ENCODE measurements at regions of chr22 and their contacts with region 1.

Region 1: GRCh38 chr22:42369245-42370041 is 62.8 kb downstream of the NFAM1 start:
- DNase-seq: peak; percentile 82
- H3K4me3 Mint-ChIP-seq: peak overlapping the region; percentile 85
- H3K27ac Mint-ChIP-seq: peak overlapping the region; percentile 30
- H3K4me1 Mint-ChIP-seq: peaks cover 7% of the 10 kb centered on the region
- H3K27me3 Mint-ChIP-seq: peaks cover 40% of the 10 kb centered on the region

Region 2: GRCh38 chr22:41800348-41801146 is 568.9 kb before region 1 on chr22 and contains the start of gene CCDC134:
- intact Hi-C with region 1: loop called (anchors 1 kb)
- DNase-seq: peak; percentile 90
- H3K4me3 Mint-ChIP-seq: peak within 1 kb of the TSS; percentile 99
- H3K27ac Mint-ChIP-seq: peak within 1 kb of the TSS; percentile 98
- H3K4me1 Mint-ChIP-seq: peaks cover 35% of the 10 kb centered on the region
- H3K27me3 Mint-ChIP-seq: no peaks in the 10 kb centered on the region
- total RNA-seq, gene CCDC134: 18.0 and 19.6 TPM in 2 replicates

Region 3: DNA sequence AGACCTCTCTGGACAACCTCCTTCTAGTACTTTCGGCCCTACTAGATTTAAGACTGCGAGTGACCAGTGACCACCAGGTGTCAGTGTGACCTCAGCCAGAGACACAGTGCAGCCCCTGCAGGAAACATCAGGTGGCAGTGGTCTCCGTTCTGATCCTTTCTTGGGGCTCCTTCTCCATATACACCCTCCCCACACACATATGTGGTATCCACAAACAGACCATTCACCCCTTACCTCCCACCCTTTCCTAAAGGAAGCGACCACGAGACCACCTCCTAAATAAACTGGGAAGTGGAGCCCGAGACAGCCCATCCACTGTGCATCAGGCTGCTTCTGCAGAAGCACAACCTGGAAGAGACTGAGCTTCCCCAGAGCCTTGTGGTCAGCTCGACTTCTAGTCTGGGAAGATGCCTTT is 200.4 kb before region 1 on chr22:
- intact Hi-C with region 1: loop called (anchors 5 kb)
- DNase-seq: peak; percentile 47
- H3K4me3 Mint-ChIP-seq: no peak overlapping the region
- H3K27ac Mint-ChIP-seq: peak overlapping the region; percentile 34
- H3K4me1 Mint-ChIP-seq: peaks cover 23% of the 10 kb centered on the region
- H3K27me3 Mint-ChIP-seq: no peaks in the 10 kb centered on the region

Region 4: GRCh38 chr22:42294034-42294985 is 75.1 kb before region 1 on chr22:
- intact Hi-C with region 1: no loop called
- DNase-seq: no peak
- H3K4me3 Mint-ChIP-seq: no peak overlapping the region
- H3K27ac Mint-ChIP-seq: no peak overlapping the region
- H3K4me1 Mint-ChIP-seq: peaks cover 16% of the 10 kb centered on the region
- H3K27me3 Mint-ChIP-seq: no peaks in the 10 kb centered on the region

Region 5: DNA sequence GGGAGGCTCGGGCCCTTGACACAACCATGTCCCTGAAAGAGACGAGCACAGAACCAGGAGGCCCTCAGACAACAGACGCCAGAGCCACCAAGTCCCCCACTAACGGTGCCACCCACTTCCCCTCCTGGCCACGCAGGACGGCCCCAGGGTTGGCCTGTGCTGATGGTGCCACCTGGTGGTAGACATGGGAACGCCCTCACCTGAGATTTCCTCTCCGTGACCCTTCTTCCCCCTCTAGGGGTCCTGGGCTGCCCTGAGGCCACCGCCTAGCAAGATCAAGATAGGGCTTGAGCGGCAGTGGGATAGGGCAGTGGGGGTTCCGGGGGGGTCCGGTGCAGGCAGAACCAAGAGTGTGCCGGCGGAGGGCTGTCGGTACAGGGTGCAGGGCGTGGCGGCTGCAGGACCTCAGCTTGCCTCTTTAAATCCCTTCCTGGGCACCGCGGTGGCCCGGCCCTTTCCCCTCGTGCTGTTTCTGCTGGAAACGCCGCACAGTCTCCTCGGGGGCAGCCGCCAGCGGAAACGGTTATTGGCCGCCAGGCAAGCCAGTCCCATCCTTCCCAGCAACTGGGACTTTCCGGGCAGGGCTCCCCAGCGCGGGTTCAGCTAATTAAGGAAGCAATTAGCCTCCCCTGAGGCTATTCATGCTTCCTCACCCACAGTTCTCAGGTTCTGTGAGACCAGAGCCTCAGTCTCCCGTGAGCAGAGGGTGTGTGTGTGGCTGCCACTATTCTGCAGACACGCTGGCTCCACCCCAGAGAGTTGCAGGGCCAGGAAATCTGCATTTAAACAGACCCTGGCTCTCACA is 68.2 kb after region 1 on chr22:
- intact Hi-C with region 1: loop called (anchors 2 kb)
- DNase-seq: peak; percentile 76
- H3K4me3 Mint-ChIP-seq: peak overlapping the region; percentile 83
- H3K27ac Mint-ChIP-seq: peak overlapping the region; percentile 73
- H3K4me1 Mint-ChIP-seq: peaks cover 21% of the 10 kb centered on the region
- H3K27me3 Mint-ChIP-seq: peaks cover 8% of the 10 kb centered on the region

Region 6: GRCh38 chr22:42500161-42500835 is 130.9 kb after region 1 on chr22:
- intact Hi-C with region 1: loop called (anchors 5 kb)
- DNase-seq: peak; percentile 73
- H3K4me3 Mint-ChIP-seq: peak overlapping the region; percentile 37
- H3K27ac Mint-ChIP-seq: no peak overlapping the region
- H3K4me1 Mint-ChIP-seq: peaks cover 16% of the 10 kb centered on the region
- H3K27me3 Mint-ChIP-seq: no peaks in the 10 kb centered on the region